ENCODE measurements at regions of chr4 and their contacts with region 1.

Region 1: DNA sequence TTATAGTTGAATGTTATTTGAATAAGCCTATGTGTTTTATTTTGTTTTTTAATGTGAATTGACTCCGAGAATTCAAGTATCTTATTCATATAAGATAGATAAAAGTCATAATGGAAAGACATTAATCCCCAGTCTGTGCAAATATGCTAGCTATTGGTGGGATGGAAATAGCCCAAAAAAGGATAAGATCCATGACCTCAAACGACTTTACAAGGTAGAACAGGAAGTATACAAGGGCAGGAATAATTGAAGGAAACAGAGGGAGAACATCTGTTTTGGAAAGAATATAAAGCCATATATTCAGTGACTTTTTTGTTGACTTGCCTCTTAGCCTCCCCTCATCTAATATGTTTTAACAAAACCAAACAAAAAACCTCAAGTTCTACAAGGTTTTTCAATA is 9.0 kb downstream of the ABCE1 start:
- DNase-seq: no peak
- H3K4me3 Mint-ChIP-seq: no peak overlapping the region
- H3K27ac Mint-ChIP-seq: no peak overlapping the region
- H3K4me1 Mint-ChIP-seq: peaks cover 6% of the 10 kb centered on the region
- H3K27me3 Mint-ChIP-seq: no peaks in the 10 kb centered on the region

Region 2: DNA sequence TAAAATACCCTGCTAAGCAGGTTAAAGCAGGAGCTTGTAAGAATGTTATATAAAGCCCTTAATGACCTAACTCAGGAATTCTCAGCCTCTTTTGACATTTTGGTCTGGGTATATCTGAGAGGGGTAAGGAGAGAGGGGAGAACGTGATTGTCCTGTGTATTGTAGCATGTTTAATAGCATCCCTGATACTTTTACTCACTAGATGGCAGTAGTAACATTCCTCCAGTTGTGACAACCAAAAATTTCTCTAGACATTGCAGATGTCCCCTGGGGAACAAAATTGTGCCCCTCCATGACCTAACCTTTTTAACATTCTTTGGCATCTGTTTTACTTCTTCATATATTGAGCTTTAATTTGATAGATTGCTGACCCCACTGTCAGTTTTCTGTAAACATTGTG is 1575.7 kb before region 1 on chr4:
- CTCF ChIA-PET with region 1: no interaction called
- POLR2A ChIA-PET with region 1: no interaction called
- intact Hi-C with region 1: loop called (anchors 10 kb)
- DNase-seq: no peak
- H3K4me3 Mint-ChIP-seq: no peak overlapping the region
- H3K27ac Mint-ChIP-seq: no peak overlapping the region
- H3K4me1 Mint-ChIP-seq: peaks cover 4% of the 10 kb centered on the region
- H3K27me3 Mint-ChIP-seq: no peaks in the 10 kb centered on the region

Region 3: GRCh38 chr4:144799486-144799885 is 307.6 kb before region 1 on chr4:
- CTCF ChIA-PET with region 1: no interaction called
- POLR2A ChIA-PET with region 1: no interaction called
- intact Hi-C with region 1: no loop called
- DNase-seq: no peak
- H3K4me3 Mint-ChIP-seq: no peak overlapping the region
- H3K27ac Mint-ChIP-seq: no peak overlapping the region
- H3K4me1 Mint-ChIP-seq: no peaks in the 10 kb centered on the region
- H3K27me3 Mint-ChIP-seq: no peaks in the 10 kb centered on the region

Region 4: DNA sequence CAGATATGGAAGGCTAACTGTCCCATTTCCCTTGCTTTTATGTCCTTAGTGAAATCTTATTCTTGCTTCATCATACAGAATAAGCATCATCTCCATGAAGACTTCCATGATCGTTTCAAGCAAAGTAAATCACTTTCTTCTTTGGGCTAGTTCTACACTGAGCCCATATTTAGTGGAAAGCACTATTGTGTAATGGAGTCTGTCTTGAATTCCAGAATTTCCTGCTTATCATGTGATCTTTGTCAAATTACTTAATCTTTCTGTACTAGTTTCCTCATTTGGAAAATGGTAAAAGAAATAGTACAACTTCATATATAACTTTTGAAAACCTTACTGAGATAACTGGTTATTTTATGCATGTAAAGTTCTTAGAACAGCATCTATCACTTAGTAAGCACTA is 16.7 kb before region 1 on chr4:
- CTCF ChIA-PET with region 1: no interaction called
- POLR2A ChIA-PET with region 1: no interaction called
- intact Hi-C with region 1: no loop called
- DNase-seq: no peak
- H3K4me3 Mint-ChIP-seq: no peak overlapping the region
- H3K27ac Mint-ChIP-seq: no peak overlapping the region
- H3K4me1 Mint-ChIP-seq: peaks cover 17% of the 10 kb centered on the region
- H3K27me3 Mint-ChIP-seq: no peaks in the 10 kb centered on the region

Region 5: DNA sequence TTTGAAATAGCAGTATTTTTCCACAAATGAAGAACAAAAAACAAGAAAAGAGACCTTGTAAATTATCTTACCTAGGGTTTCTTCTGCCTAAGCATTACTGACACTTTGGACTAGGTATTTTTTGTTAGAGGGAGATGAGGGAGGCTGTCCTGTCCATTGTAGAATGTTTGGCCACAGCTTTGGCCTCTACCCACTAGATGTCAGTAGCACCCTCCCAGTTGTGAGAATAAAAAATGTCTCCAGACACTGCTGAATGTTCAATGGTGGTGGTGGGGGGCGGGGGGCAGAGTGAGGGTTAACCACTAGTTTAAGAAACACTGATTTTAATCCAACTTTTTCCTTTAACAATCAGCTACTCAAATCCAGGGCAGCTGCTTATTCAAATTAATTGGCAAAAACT is 47.4 kb after region 1 on chr4:
- CTCF ChIA-PET with region 1: no interaction called
- POLR2A ChIA-PET with region 1: no interaction called
- intact Hi-C with region 1: loop called (anchors 5 kb)
- DNase-seq: no peak
- H3K4me3 Mint-ChIP-seq: no peak overlapping the region
- H3K27ac Mint-ChIP-seq: no peak overlapping the region
- H3K4me1 Mint-ChIP-seq: peaks cover 6% of the 10 kb centered on the region
- H3K27me3 Mint-ChIP-seq: no peaks in the 10 kb centered on the region